ENCODE measurements at regions of chr19 and their contacts with region 1.

Region 1: DNA sequence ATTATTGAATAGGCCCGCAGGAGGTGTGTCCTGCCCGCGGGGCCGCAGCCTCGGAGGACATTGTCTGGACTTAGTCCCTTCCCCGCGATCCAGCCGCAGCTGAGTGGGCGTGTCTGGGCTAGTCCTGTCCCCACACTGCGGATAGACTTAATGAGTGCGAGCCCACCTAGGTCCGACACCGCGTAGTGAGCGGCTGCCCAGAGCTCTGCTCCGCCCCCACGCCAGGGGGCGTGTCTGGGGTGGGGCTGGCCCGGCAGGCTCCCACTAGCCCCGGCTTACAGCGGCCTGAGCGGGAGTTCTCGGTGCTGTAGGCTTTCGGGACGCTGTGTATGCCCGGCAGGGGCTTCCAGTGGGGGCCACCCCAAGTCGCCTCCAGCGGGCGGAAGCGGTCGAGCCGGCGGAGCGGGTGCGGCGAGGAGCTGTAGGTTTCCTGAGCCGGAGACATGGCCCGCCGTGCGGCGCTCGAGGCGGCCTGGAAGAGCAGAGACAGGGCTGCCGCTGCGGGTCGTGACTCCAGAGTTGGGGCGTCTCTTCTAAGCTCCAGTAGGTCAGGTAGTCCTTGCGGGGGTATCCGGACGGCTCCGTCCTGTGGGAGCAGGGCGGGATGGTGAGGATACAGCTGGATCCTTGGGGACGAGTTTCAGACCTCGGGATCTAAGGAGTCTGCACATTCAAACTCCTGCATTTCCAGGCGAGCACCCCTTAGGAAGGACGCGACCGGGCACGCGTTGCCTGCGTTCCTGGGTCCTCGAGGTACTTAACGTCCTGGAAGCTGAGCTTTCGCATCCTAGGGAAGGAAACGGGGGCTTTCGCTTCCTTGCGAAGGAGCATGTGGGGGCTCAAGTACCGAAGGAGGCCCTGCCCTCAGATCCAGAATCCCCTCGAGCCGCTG is 1.3 kb downstream of the CGB7 start:
- DNase-seq: peak; percentile 49
- H3K4me3 Mint-ChIP-seq: peak overlapping the region; percentile 73
- H3K27ac Mint-ChIP-seq: no peak overlapping the region
- H3K4me1 Mint-ChIP-seq: peaks cover 18% of the 10 kb centered on the region
- H3K27me3 Mint-ChIP-seq: peaks cover 44% of the 10 kb centered on the region

Region 2: GRCh38 chr19:49017666-49018351 is 38.4 kb before region 1 on chr19:
- intact Hi-C with region 1: loop called (anchors 2 kb)
- DNase-seq: peak; percentile 49
- H3K4me3 Mint-ChIP-seq: peak overlapping the region; percentile 84
- H3K27ac Mint-ChIP-seq: no peak overlapping the region
- H3K4me1 Mint-ChIP-seq: peaks cover 20% of the 10 kb centered on the region
- H3K27me3 Mint-ChIP-seq: peaks cover 20% of the 10 kb centered on the region